RWPE1 (cell line): ENCODE measurements at regions of chr17 and their contacts with region 1.

Region 1: GRCh38 chr17:75601057-75602051 is 13.8 kb downstream of the MYO15B start:
- DNase-seq: peak; percentile 43
- H3K27ac ChIP-seq: no peak overlapping the region
- CTCF ChIP-seq: peak; percentile 80

Region 2: DNA sequence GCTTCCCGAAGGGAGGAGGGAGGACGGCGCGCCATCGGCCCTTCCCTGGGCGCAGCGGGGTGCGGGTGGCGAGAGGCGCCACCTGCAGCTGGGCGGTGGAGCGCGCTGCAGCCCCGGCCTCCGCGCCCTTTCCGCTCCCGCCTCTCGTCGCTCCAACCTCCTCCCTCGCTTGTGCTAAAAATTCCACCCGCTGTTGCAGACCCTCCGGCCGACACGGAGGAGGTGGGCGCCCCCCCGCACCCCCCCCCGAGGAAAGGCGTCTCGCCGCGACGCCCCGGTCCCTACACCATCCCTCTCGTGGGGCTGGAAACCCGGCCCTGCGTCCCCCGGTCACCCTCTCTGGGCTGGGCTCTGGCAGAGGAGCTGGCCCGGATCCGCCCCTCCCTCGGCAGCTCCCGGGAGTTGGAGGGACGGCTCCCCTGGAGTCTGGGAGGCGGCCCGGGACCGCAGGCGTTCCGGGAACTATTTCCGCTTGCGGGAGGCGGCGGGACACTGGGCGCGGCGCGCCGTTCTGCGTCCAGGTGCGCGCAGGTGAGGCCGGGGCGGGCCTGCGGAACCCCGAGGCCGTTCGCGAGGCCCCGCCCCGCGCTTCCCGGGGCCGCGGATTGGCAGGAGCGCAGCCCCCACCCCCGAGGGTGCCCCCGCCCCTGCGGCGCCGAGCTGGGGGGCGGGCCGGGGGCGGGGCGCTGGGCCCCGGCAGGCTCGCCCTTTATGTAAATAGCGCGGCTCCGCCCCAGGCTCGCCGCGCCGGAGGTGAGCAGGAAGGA is 76.2 kb before region 1 on chr17 and contains the start of gene LLGL2:
- CTCF ChIA-PET with region 1: no interaction called
- POLR2A ChIA-PET with region 1: no interaction called
- DNase-seq: peak; percentile 98
- H3K27ac ChIP-seq: peak within 1 kb of the TSS; percentile 78
- CTCF ChIP-seq: peak; percentile 75

Region 3: GRCh38 chr17:75589012-75589918 is 12.1 kb before region 1 on chr17:
- CTCF ChIA-PET with region 1: interaction called, 29 read pairs
- POLR2A ChIA-PET with region 1: no interaction called
- DNase-seq: peak; percentile 96
- H3K27ac ChIP-seq: peak overlapping the region; percentile 77
- CTCF ChIP-seq: peak; percentile 88

Region 4: GRCh38 chr17:75614006-75614405 is 12.7 kb after region 1 on chr17:
- CTCF ChIA-PET with region 1: interaction called, 12 read pairs
- POLR2A ChIA-PET with region 1: no interaction called
- DNase-seq: no peak
- H3K27ac ChIP-seq: no peak overlapping the region
- CTCF ChIP-seq: no peak